ENCODE measurements at regions of chr16 and their contacts with region 1.

Region 1: DNA sequence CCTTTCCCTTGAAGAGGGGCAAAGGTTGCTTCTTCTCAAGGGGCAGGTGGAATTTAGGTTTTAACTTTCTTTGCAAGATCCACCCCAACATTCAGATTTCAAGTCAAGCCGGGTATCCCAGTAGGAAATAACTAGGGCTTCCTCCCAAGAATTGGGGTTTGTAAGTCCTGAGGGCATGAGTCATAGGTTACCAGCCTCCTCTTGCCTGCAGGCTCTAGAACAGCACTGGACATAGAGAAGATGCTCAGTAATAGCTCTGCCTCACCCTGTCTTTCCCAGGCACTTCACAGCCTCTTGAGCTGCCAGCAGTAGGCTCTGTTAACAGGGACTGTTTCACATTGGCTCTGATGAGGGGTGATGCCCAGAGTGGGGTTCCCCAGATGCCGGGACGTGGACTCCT is 35.8 kb upstream of the ZFP90 start:
- DNase-seq: peak in 1 of 5 donors; percentile 10
- H3K4me3 ChIP-seq: no peak overlapping the region
- H3K27ac ChIP-seq: no peak overlapping the region
- H3K4me1 ChIP-seq: no peaks in the 10 kb centered on the region
- H3K27me3 ChIP-seq: no peaks in the 10 kb centered on the region
- CTCF ChIP-seq: no peak

Region 2: GRCh38 chr16:68200088-68200783 is 303.1 kb before region 1 on chr16:
- intact Hi-C with region 1: no loop called
- DNase-seq: no peak
- H3K4me3 ChIP-seq: no peak overlapping the region
- H3K27ac ChIP-seq: no peak overlapping the region
- H3K4me1 ChIP-seq: no peaks in the 10 kb centered on the region
- H3K27me3 ChIP-seq: no peaks in the 10 kb centered on the region
- CTCF ChIP-seq: no peak

Region 3: DNA sequence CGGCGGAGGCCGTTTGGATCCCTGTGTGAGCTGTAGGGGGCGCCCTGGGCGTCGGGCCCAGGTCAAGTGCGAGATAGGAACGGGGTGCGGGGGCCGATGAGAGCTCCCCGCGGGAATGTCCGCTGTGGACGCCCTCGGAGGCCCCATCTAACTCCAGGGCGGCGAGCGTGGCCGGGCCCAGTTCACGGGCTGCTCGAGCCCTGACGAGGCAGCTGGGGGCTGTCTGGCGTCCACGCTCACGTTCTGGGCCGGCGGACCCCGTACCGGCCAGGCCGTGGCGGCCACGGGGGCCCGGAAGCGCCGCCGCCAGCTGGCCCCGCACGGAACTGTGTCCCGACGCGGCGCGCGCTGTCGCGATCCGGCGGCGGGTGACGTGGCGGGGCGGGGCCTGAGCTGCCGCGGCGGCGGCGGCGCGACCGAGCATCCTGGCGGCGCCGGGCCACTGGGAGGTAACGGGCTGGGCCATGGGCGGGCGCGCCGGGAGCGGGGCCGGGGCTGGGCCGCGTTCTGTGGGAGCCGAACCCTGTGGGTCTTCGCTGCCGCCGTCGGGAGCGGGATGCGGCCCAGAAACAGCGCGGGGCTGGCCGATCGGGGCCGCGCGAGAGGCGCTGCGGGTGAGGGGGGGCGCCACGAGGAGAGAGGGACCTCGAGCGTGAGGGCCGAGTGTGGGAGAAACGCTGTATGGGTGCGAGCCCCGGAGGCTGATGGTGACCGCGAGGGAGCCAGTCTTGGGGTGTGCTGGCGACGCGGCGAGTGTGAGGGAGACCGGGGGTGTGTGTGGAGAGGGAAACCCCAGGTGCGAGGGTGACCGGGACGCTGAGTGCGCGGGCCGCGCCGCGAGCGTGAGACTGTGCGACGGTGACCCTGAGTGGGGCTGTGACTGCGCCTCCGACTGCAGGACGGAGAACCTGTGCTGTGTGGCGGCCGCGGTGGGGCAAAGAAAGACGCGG is 238.9 kb before region 1 on chr16 and contains the start of gene SLC7A6:
- intact Hi-C with region 1: no loop called
- DNase-seq: peak; percentile 73 to 92 (median 80)
- H3K4me3 ChIP-seq: peak within 1 kb of the TSS; percentile 64 to 77 (median 65)
- H3K27ac ChIP-seq: peak within 1 kb of the TSS; percentile 92 to 96
- H3K4me1 ChIP-seq: peaks cover 0 to 27% (median 13%) of the 10 kb centered on the region in 3 donors
- H3K27me3 ChIP-seq: no peaks in the 10 kb centered on the region
- CTCF ChIP-seq: peak; percentile 53
- total RNA-seq, gene SLC7A6: 24.0 TPM

Region 4: DNA sequence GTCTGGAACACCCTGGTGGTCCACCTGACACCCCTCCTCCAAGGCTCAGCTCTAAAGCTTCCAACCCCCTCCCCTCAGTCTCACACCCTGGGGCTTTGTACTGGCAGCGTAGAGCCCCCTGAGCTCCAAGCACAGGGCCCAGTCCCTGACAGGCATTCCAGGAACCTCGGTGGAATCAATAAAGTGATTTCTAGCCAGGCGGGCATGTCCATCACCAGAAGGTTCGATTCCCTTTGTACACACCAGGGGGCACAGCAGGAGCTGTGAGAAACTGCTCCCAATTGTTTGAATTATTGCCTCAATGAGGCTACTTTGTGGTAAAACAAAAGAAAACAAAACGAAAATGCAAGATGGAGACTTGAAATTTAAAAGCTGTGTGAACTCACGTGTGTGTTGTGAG is 106.9 kb before region 1 on chr16:
- intact Hi-C with region 1: loop called (anchors 10 kb)
- DNase-seq: peak in 4 of 5 donors; percentile 45 to 60 (median 50)
- H3K4me3 ChIP-seq: no peak overlapping the region
- H3K27ac ChIP-seq: no peak overlapping the region
- H3K4me1 ChIP-seq: no peaks in the 10 kb centered on the region
- H3K27me3 ChIP-seq: no peaks in the 10 kb centered on the region
- CTCF ChIP-seq: peak; percentile 68

Region 5: GRCh38 chr16:68548947-68549346 is 45.6 kb after region 1 on chr16:
- intact Hi-C with region 1: no loop called
- DNase-seq: no peak
- H3K4me3 ChIP-seq: no peak overlapping the region
- H3K27ac ChIP-seq: no peak overlapping the region
- H3K4me1 ChIP-seq: no peaks in the 10 kb centered on the region
- H3K27me3 ChIP-seq: no peaks in the 10 kb centered on the region
- CTCF ChIP-seq: no peak